CD4-positive, alpha-beta memory T cell (primary cell): ENCODE measurements at regions of chr5 and their contacts with region 1.

Region 1: DNA sequence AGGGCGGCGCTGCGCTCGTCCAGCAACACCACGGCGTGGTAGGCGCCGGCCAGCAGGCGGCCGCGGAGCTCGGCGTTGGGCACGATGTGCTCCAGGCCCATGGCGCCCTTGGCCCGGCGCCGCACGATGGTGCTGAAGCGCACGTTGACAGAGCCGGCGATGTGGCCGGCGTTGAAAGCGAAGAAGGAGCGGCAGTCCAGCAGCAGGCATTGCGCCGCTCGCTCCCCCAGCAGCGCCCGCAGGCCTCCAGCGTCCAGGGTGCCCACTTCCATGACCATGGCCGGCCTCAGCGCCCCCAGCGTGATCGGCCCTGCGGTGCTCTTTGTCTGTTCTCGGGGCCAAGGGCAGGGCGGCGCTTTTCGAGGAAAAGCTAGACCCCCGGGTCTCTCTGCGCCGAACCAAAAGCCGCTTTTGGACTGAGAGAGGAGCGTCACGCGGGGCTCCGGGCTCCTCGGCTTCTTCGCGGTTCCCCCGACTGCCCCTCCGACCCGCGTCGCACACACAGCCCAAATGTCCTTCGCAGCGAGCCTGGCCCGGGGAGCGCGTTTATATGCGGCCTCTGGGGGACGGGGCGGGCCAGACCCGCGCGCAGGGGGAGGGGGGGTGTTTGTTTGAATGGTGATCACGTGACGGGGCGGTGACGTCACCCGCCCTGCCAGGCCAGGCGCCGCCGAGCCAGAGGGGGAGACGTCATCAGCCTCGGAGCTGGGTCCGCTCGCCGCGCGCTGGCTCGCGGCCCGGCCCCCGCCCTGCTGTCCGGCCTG is at the start of gene DUSP1:
- DNase-seq: peak; percentile 97 to 98 (median 98)
- H3K4me3 ChIP-seq: peak within 1 kb of the TSS; percentile 83 to 92
- H3K4me3 Mint-ChIP-seq: peak within 1 kb of the TSS; percentile 93 to 98 (median 96)
- H3K27ac ChIP-seq: peak within 1 kb of the TSS; percentile 100
- H3K27ac Mint-ChIP-seq: peak within 1 kb of the TSS; percentile 99 to 100 (median 100)
- H3K4me1 ChIP-seq: peaks cover 64% of the 10 kb centered on the region
- H3K4me1 Mint-ChIP-seq: peaks cover 47 to 89% (median 60%) of the 10 kb centered on the region in 4 donors
- H3K27me3 ChIP-seq: no peaks in the 10 kb centered on the region
- H3K27me3 Mint-ChIP-seq: peaks cover 0 to 3% of the 10 kb centered on the region in 2 donors
- total RNA-seq, gene DUSP1: 18.0 to 18.8 TPM

Region 2: DNA sequence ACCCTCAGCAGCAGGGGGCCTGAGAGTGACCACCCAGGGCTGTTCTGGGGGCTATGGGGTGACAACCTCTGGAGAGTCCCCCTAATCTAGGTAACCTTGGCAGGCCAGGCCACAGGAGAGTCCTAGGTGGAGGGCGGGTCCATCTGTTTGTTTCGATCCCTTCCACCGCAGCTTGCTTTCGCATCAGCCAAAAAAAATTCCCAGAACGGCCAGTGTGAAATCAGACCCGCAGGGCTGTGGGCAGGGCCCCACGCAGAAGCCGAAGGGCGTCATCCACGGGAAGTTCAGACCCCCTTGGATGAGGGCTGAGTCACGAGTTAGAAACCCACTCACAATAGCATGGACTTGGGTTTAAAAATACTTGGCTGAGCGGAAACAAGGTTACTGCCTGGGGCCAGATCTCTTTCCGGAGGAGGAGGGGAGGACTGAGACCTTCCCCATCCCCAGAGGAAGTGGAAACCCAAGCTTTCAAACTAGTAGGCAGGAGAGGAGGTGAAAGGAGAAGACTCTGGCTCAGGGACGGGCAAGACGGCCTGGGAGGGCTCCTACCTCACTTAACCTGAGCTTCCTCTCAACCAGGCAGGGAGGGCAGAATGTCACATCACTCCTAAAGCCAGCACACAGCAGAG is 591.4 kb before region 1 on chr5:
- CTCF ChIA-PET with region 1: no interaction called
- POLR2A ChIA-PET with region 1: interaction called, 19 read pairs
- intact Hi-C with region 1: no loop called
- DNase-seq: peak in 4 of 5 donors; percentile 37 to 80 (median 44)
- H3K4me3 ChIP-seq: peak overlapping the region; percentile 44 to 55
- H3K4me3 Mint-ChIP-seq: peak overlapping the region; percentile 85 to 99 (median 94)
- H3K27ac ChIP-seq: peak overlapping the region; percentile 96
- H3K27ac Mint-ChIP-seq: peak overlapping the region; percentile 97 to 100 (median 99)
- H3K4me1 ChIP-seq: peaks cover 90% of the 10 kb centered on the region
- H3K4me1 Mint-ChIP-seq: peaks cover 51 to 97% (median 75%) of the 10 kb centered on the region in 4 donors
- H3K27me3 ChIP-seq: no peaks in the 10 kb centered on the region
- H3K27me3 Mint-ChIP-seq: no peaks in the 10 kb centered on the region

Region 3: GRCh38 chr5:172721301-172722130 is 49.3 kb before region 1 on chr5:
- CTCF ChIA-PET with region 1: interaction called, 44 read pairs
- POLR2A ChIA-PET with region 1: interaction called, 97 read pairs
- intact Hi-C with region 1: loop called (anchors 1 kb)
- DNase-seq: no peak
- H3K4me3 ChIP-seq: no peak overlapping the region
- H3K4me3 Mint-ChIP-seq: peak overlapping the region in 4 of 8 donors; percentile 35 to 69 (median 54)
- H3K27ac ChIP-seq: no peak overlapping the region
- H3K27ac Mint-ChIP-seq: peak overlapping the region in 5 of 7 donors; percentile 5 to 95 (median 62)
- H3K4me1 ChIP-seq: peaks cover 24% of the 10 kb centered on the region
- H3K4me1 Mint-ChIP-seq: peaks cover 15 to 34% (median 22%) of the 10 kb centered on the region in 4 donors
- H3K27me3 ChIP-seq: no peaks in the 10 kb centered on the region
- H3K27me3 Mint-ChIP-seq: no peaks in the 10 kb centered on the region

Region 4: GRCh38 chr5:172798422-172799200 is 27.8 kb after region 1 on chr5:
- CTCF ChIA-PET with region 1: interaction called, 11 read pairs
- POLR2A ChIA-PET with region 1: interaction called, 26 read pairs
- intact Hi-C with region 1: no loop called
- DNase-seq: no peak
- H3K4me3 ChIP-seq: no peak overlapping the region
- H3K4me3 Mint-ChIP-seq: no peak overlapping the region
- H3K27ac ChIP-seq: no peak overlapping the region
- H3K27ac Mint-ChIP-seq: peak overlapping the region in 1 of 7 donors; percentile 36
- H3K4me1 ChIP-seq: no peaks in the 10 kb centered on the region
- H3K4me1 Mint-ChIP-seq: peaks cover 0 to 5% (median 3%) of the 10 kb centered on the region in 4 donors
- H3K27me3 ChIP-seq: no peaks in the 10 kb centered on the region
- H3K27me3 Mint-ChIP-seq: no peaks in the 10 kb centered on the region

Region 5: DNA sequence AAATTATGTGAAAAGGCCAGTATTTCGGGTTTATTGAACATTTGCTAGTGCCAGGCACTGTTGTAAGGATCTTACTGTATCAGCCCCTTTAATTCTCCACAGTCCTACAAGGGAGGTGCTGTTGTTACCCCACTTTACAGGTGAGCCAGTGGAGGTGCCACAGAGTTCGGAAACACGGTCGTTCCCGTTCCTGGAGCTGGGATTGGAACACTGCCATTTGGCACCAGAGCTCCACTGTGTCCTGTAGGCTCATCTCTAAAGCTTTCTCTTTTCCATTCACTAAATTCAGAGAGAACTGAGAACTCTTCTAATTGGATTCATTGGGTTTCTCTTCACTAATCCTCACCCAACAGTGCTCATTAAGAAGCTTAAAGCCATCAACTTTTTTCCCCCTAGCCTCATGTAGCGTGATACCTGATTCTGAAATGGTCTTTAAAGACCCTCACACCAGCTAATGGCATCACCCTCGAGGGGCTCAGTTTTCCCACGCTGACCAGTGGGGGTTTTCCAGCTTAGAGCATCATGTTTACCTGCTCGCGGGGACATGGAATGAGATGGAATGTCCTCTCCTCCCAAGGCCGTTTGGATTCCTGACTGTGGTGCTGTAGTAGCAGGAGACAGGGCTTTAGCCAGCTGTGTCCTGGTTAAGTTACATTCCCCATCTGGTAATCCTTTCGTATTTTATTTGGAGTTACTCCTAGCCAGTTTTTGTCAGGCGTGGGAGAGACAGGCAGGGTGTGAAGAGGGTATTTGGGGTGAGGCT is 69.0 kb after region 1 on chr5:
- CTCF ChIA-PET with region 1: interaction called, 22 read pairs
- POLR2A ChIA-PET with region 1: interaction called, 114 read pairs
- intact Hi-C with region 1: no loop called
- DNase-seq: no peak
- H3K4me3 ChIP-seq: no peak overlapping the region
- H3K4me3 Mint-ChIP-seq: no peak overlapping the region
- H3K27ac ChIP-seq: no peak overlapping the region
- H3K27ac Mint-ChIP-seq: peak overlapping the region in 5 of 7 donors; percentile 16 to 64 (median 36)
- H3K4me1 ChIP-seq: peaks cover 36% of the 10 kb centered on the region
- H3K4me1 Mint-ChIP-seq: peaks cover 30 to 61% (median 45%) of the 10 kb centered on the region in 4 donors
- H3K27me3 ChIP-seq: no peaks in the 10 kb centered on the region
- H3K27me3 Mint-ChIP-seq: no peaks in the 10 kb centered on the region

Region 6: GRCh38 chr5:172958331-172959046 is 187.6 kb after region 1 on chr5:
- CTCF ChIA-PET with region 1: interaction called, 5 read pairs
- POLR2A ChIA-PET with region 1: interaction called, 23 read pairs
- intact Hi-C with region 1: loop called (anchors 2 kb)
- DNase-seq: peak; percentile 62 to 70 (median 67)
- H3K4me3 ChIP-seq: peak overlapping the region in 1 of 2 donors; percentile 97
- H3K4me3 Mint-ChIP-seq: peak overlapping the region; percentile 86 to 98 (median 96)
- H3K27ac ChIP-seq: peak overlapping the region; percentile 82
- H3K27ac Mint-ChIP-seq: peak overlapping the region; percentile 92 to 99 (median 98)
- H3K4me1 ChIP-seq: peaks cover 16% of the 10 kb centered on the region
- H3K4me1 Mint-ChIP-seq: peaks cover 18 to 43% (median 27%) of the 10 kb centered on the region in 4 donors
- H3K27me3 ChIP-seq: no peaks in the 10 kb centered on the region
- H3K27me3 Mint-ChIP-seq: no peaks in the 10 kb centered on the region

Region 7: GRCh38 chr5:173144200-173145176 is 373.6 kb after region 1 on chr5 and contains the start of gene BNIP1:
- CTCF ChIA-PET with region 1: no interaction called
- POLR2A ChIA-PET with region 1: interaction called, 13 read pairs
- intact Hi-C with region 1: loop called (anchors 10 kb)
- DNase-seq: peak; percentile 95 to 98 (median 95)
- H3K4me3 ChIP-seq: peak within 1 kb of the TSS; percentile 80 to 100
- H3K4me3 Mint-ChIP-seq: peak within 1 kb of the TSS; percentile 97 to 99 (median 98)
- H3K27ac ChIP-seq: peak within 1 kb of the TSS; percentile 94
- H3K27ac Mint-ChIP-seq: peak within 1 kb of the TSS; percentile 99 to 100 (median 99)
- H3K4me1 ChIP-seq: peaks cover 9% of the 10 kb centered on the region
- H3K4me1 Mint-ChIP-seq: peaks cover 8 to 19% (median 11%) of the 10 kb centered on the region in 4 donors
- H3K27me3 ChIP-seq: no peaks in the 10 kb centered on the region
- H3K27me3 Mint-ChIP-seq: no peaks in the 10 kb centered on the region
- total RNA-seq, gene BNIP1: 7.1 to 7.7 TPM

Region 8: GRCh38 chr5:174745590-174746103 is 1974.8 kb after region 1 on chr5:
- CTCF ChIA-PET with region 1: no interaction called
- POLR2A ChIA-PET with region 1: no interaction called
- intact Hi-C with region 1: no loop called
- DNase-seq: no peak
- H3K4me3 ChIP-seq: no peak overlapping the region
- H3K4me3 Mint-ChIP-seq: no peak overlapping the region
- H3K27ac ChIP-seq: no peak overlapping the region
- H3K27ac Mint-ChIP-seq: no peak overlapping the region
- H3K4me1 ChIP-seq: no peaks in the 10 kb centered on the region
- H3K4me1 Mint-ChIP-seq: no peaks in the 10 kb centered on the region
- H3K27me3 ChIP-seq: no peaks in the 10 kb centered on the region
- H3K27me3 Mint-ChIP-seq: peaks cover 25 to 28% of the 10 kb centered on the region in 2 donors